ENCODE measurements at regions of chr1 and their contacts with region 1.

Region 1: GRCh38 chr1:64242895-64243756 is 39.7 kb downstream of the UBE2U start:
- DNase-seq: no peak

Region 2: DNA sequence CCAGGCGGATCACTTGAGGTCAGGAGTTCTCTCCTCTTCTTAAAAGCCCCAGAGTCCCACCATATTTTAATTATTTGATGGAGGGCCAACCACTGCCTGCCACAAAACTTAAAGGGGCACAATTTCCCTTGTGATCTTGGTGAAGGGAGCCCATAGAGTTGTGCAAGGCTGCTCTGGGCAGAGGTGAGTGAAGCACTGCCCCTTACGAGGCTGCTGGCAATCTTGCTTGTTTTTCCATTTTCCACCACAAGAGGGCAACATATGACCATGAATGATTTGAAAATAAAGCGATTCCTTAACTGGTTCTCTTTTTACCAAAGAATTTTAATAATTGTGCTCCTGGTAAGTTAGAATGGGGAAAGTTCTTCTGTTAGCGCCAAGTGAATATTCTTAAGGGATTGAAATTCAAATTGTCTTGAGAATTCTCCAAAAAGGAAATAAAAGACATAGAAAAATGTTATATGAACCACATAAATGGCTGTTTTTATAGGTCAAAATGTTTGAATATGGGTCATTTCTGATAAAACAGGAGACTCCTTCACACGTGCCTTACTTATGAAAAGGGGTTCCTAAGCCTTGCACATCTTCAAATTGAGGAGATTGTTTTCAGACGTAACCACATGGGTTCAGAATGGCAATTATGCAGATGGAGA is 627.2 kb before region 1 on chr1:
- intact Hi-C with region 1: loop called (anchors 1 kb)
- DNase-seq: peak in 5 of 10 donors; percentile 19 to 75 (median 36)

Region 3: GRCh38 chr1:63674238-63674864 is 568.8 kb before region 1 on chr1:
- intact Hi-C with region 1: loop called (anchors 5 kb)
- DNase-seq: peak in 9 of 10 donors; percentile 19 to 90 (median 58)

Region 4: GRCh38 chr1:63691701-63692425 is 551.3 kb before region 1 on chr1:
- intact Hi-C with region 1: loop called (anchors 5 kb)
- DNase-seq: peak in 2 of 10 donors; percentile 31 to 51

Region 5: DNA sequence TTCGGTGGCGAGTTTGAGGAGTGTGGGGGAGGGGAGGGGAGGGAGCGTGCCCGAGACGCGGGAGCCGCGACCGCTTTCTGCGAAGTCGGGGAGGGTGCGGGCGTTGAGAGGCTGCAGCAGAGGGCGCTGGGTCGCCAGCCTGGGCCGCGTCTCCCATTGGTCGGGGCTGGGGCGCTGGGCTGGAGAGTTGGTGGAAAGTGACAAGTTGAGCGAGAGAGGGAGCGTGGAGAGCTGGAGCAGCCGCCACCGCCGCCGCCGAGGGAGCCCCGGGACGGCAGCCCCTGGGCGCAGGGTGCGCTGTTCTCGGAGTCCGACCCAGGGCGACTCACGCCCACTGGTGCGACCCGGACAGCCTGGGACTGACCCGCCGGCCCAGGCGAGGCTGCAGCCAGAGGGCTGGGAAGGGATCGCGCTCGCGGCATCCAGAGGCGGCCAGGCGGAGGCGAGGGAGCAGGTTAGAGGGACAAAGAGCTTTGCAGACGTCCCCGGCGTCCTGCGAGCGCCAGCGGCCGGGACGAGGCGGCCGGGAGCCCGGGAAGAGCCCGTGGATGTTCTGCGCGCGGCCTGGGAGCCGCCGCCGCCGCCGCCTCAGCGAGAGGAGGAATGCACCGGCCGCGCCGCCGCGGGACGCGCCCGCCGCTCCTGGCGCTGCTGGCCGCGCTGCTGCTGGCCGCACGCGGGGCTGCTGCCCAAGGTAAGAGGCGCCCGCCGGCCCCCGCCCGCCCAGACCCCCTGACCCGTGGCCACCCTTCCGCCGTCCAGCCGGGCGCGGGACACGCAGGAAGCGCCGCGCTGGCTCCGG is 469.1 kb before region 1 on chr1 and contains the start of gene ROR1:
- intact Hi-C with region 1: loop called (anchors 2 kb)
- DNase-seq: peak; percentile 74 to 97 (median 84)

Region 6: DNA sequence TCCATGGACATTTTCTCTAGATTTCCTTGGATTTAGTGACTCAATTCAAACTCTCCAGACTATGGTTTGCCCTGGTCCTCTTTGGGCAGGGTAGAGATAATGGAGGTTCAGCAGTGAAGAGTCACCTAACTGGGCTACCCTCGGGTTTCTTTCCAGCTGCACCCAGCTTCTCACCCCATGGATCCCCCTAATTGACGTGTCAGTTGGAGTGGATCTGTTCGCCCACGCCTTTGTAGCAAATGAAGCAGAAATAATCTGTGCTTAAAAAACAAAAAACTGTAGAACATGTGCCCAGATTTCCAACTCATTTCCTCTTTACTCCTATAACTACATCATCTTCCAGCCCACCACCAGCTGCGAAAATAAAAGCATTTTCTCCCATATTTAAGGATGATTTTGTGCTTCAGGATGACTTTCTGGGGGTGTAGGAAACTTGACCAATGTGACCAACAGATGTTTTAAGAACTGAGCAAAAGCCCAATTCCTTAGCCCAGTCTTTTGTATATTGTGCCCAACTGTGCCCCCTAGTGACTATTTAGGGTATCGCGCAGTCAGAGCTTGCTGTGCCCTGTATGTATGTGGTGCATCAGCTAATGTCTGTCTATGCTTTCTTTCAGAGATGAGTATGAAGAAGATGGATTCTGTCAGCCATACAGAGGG is 106.2 kb before region 1 on chr1:
- intact Hi-C with region 1: loop called (anchors 2 kb)
- DNase-seq: peak; percentile 48 to 95 (median 82)

Region 7: DNA sequence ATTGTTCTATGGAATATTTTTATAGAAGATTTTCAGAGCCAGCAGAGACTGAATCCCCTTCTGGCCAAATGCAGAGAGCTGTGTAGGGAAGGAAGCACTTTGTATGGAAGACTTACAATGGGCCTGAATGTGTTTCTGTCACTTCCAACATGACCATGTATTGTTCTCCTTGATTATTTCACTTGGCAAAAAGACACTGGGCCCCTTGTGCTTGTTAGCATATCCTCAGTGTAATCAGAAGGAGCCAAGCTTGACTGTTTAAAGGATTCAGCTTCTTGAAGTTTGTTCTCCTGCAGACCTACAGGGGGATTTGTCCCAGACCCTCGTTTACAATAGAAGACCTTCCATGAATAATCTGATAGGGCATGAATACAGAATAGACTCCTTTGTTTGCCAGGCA is 87.8 kb before region 1 on chr1:
- intact Hi-C with region 1: loop called (anchors 5 kb)
- DNase-seq: no peak

Region 8: GRCh38 chr1:64337475-64337874 is 94.3 kb after region 1 on chr1:
- intact Hi-C with region 1: no loop called
- DNase-seq: no peak

Measured in posterior cingulate gyrus (tissue), 11 donors.